HEK293 (cell line): ENCODE measurements at regions of chr20 and their contacts with region 1.

Region 1: DNA sequence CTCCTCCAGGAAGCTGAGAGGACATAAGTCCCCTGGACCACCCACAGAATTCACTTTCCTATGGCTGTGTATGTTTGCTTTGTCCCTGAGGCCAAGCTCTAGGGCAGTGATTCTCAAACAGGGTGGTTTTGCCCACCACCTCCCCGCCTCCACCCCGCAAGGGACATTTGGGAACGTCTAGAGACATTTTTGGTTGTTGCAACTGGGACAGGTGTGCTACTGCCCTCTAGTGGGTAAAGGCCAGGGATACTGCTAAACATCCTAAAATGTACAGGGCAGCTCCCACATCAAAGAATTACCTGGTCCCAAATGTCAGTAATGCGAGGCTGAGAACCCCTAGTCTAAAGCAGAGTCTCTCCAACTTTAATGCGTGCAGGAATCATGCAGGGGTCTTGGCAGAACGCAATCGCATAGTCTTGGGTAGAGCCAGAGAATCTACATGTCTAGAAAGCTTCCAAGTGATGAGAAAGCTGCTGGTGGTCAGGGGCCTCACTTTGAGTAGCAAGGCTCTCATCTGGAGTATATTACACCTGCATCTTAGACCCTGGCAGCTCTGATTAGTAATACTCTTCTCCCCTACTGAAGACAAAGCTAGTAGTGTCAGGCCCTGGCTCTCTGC is 5.1 kb downstream of the KCNS1 start:
- H3K4me3 ChIP-seq: no peak overlapping the region
- H3K27ac ChIP-seq: no peak overlapping the region
- H3K4me1 ChIP-seq: no peaks in the 10 kb centered on the region
- CTCF ChIP-seq: peak; percentile 61; the same call in 1 of the 2 replicates

Region 2: DNA sequence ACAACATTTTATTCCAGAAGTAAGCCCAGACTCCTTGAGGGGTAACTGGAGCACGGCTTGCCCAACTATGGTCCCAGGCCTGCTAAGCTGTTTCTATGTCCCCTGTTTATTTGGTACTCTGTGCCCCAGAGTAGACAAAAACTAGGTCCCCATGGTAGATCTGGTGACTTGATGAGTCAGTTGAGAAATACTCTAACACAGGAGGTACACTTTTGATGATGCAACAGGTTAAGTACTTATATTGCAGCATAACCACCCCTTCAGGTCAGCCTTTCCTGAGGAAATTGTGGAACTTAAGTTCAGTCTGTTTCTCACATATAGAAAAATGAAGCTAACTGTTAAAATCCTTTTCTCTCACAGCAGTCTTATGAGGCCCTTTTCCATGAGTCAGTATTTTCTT is 600.6 kb before region 1 on chr20:
- CTCF ChIA-PET with region 1: no interaction called
- POLR2A ChIA-PET with region 1: no interaction called
- H3K4me3 ChIP-seq: no peak overlapping the region
- H3K27ac ChIP-seq: no peak overlapping the region
- H3K4me1 ChIP-seq: no peaks in the 10 kb centered on the region
- CTCF ChIP-seq: no peak

Region 3: GRCh38 chr20:45011108-45011526 is 84.7 kb before region 1 on chr20:
- CTCF ChIA-PET with region 1: interaction called, 112 read pairs
- POLR2A ChIA-PET with region 1: no interaction called
- H3K4me3 ChIP-seq: no peak overlapping the region
- H3K27ac ChIP-seq: no peak overlapping the region
- H3K4me1 ChIP-seq: peaks cover 16% of the 10 kb centered on the region
- CTCF ChIP-seq: peak; percentile 56; the same call in 1 of the 2 replicates

Region 4: GRCh38 chr20:45044084-45044573 is 51.7 kb before region 1 on chr20:
- CTCF ChIA-PET with region 1: interaction called, 90 read pairs
- POLR2A ChIA-PET with region 1: interaction called, 4 read pairs
- H3K4me3 ChIP-seq: no peak overlapping the region
- H3K27ac ChIP-seq: no peak overlapping the region
- H3K4me1 ChIP-seq: peaks cover 6% of the 10 kb centered on the region; the same call in 1 of the 2 replicates
- CTCF ChIP-seq: peak; percentile 61

Region 5: DNA sequence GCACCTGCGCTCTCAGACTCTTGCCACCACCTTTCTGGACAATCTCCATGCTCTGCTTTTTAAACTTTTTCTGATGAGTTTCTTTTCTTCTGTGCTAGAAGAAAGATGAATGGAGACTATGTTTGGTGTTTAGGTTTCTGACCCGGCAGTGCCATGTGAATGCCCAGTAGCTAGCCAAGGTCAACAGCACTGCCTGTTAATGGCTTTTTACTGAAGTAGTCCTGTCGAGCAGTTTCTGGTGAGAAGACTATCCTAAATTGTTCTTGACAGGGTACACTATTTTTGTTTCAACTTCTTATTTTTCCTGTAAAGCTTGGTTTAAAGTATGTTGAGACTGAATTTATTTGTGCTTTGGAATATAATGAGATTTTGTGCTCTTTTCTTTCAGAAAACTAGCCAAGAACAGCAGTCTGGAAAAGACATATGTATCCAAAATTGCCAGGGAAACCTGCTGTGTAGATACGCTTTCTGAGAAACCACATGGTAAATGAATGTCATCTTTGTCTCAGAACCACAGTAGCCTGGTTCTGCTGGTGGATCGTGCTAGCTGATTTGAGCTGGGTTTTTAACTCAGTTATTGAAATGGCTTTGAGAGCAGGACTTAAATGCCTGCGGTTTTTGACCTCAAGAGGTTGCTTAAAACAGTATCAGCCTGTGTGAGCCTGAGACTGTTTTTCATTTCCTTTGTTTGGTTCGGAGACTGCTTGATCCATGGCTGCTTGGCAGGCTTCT is 43.0 kb before region 1 on chr20:
- CTCF ChIA-PET with region 1: interaction called, 26 read pairs
- POLR2A ChIA-PET with region 1: no interaction called
- H3K4me3 ChIP-seq: no peak overlapping the region
- H3K27ac ChIP-seq: no peak overlapping the region
- H3K4me1 ChIP-seq: 0 out of 2 replicates have a peak, but pooled peaks cover 3% of the 10 kb centered on the region
- CTCF ChIP-seq: no peak

Region 6: GRCh38 chr20:45070932-45071632 is 24.8 kb before region 1 on chr20:
- CTCF ChIA-PET with region 1: interaction called, 18 read pairs
- POLR2A ChIA-PET with region 1: no interaction called
- H3K4me3 ChIP-seq: no peak overlapping the region
- H3K27ac ChIP-seq: no peak overlapping the region; the same call in 1 of the 2 replicates
- H3K4me1 ChIP-seq: no peaks in the 10 kb centered on the region
- CTCF ChIP-seq: no peak

Region 7: GRCh38 chr20:45080867-45081624 is 14.8 kb before region 1 on chr20:
- CTCF ChIA-PET with region 1: interaction called, 14 read pairs
- POLR2A ChIA-PET with region 1: no interaction called
- H3K4me3 ChIP-seq: no peak overlapping the region
- H3K27ac ChIP-seq: no peak overlapping the region
- H3K4me1 ChIP-seq: no peaks in the 10 kb centered on the region
- CTCF ChIP-seq: no peak

Region 8: GRCh38 chr20:45111799-45112471 is 16.1 kb after region 1 on chr20:
- CTCF ChIA-PET with region 1: interaction called, 44 read pairs
- POLR2A ChIA-PET with region 1: no interaction called
- H3K4me3 ChIP-seq: no peak overlapping the region
- H3K27ac ChIP-seq: no peak overlapping the region
- H3K4me1 ChIP-seq: no peaks in the 10 kb centered on the region
- CTCF ChIP-seq: no peak

Region 9: GRCh38 chr20:45415774-45416637 is 320.1 kb after region 1 on chr20 and contains the start of gene PIGT:
- CTCF ChIA-PET with region 1: no interaction called
- POLR2A ChIA-PET with region 1: no interaction called
- H3K4me3 ChIP-seq: peak within 1 kb of the TSS; percentile 95
- H3K27ac ChIP-seq: no peak within 1 kb of the TSS; the same call in 1 of the 2 replicates
- H3K4me1 ChIP-seq: no peaks in the 10 kb centered on the region; the same call in 1 of the 2 replicates
- CTCF ChIP-seq: no peak

Region 10: DNA sequence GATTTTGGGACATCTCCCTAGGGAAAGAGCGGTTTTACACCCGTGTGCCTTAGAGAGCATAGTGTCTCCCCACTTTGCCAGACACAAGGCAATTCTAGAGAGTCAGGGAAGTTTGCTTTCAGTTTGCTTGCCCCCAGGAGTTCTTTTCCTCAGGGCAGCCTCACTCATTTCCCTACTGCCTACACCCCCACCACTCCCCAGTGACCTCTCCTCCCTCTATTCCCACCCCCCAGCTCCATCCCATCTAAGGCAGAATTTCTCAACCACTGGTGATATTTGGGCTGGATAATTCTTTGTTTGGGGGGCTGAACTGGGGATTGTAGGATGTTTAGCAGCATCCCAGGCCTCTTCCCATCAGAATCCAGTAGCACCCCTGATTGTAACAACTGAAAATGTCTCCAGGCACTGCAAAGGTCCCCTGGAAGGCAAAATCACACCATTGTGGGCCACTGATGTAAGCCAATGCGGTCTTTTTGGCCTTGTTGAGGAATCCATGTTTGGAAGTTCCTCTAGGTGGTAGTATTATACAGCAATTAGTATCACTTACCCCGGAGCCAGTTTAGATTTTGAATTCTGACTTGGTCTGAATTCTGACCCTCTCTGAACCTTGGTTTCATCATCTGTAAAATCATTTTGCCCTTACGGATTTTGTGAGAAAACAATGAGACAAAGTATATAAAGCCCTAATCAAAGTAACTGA is 450.0 kb after region 1 on chr20:
- CTCF ChIA-PET with region 1: no interaction called
- POLR2A ChIA-PET with region 1: no interaction called
- H3K4me3 ChIP-seq: no peak overlapping the region
- H3K27ac ChIP-seq: no peak overlapping the region
- H3K4me1 ChIP-seq: no peaks in the 10 kb centered on the region
- CTCF ChIP-seq: peak; percentile 35; the same call in 1 of the 2 replicates